PC-9 (cell line): ENCODE measurements at regions of chr14 and their contacts with region 1.

Region 1: DNA sequence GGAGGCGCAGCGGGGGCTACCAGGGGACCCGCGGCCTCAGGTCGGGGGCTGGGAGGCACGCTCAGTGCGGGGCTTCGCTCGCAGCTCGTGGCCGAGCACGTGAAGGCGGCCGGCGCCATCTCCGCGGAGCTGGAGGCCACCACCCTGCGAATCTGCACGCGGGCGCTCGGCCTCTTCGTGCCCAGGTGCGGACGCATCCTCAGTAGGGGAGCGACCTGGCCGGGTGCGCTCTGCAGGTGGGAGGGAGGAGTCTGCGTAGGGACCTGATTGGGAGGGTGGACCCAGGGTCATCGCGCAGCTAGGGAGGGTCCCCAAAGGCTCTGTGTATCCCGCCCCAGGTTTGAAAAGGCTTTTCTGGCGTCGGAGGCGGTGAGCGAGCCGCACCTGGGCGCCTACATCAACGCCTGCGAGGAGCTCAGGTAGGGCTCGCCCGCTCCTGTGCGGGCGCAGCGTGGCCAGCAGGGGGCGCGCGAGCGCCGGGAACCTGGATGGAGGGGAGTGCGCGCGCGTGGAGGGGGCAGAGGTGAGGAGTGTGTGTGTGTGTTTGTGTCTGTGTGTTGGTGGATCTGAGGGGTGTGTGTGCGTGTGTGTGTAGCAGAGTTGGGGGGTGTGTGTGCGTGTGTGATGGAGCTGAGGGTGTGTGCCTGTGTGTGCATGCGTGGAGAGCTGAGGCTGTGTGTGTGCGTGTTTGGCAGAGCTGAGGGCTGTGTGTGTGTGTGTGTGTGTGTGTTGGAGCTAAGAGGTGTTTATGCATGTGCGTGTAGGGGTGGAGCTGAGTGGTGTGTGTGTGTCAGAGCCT is 10.3 kb downstream of the EXOC3L4 start:
- DNase-seq: peak; percentile 76 to 93
- H3K4me3 ChIP-seq: peak overlapping the region; percentile 54; the same call in 1 of the 2 replicates
- H3K27ac ChIP-seq: no peak overlapping the region
- H3K4me1 ChIP-seq: peaks cover 68% of the 10 kb centered on the region
- H3K27me3 ChIP-seq: no peaks in the 10 kb centered on the region
- CTCF ChIP-seq: peak; percentile 100

Region 2: GRCh38 chr14:103091041-103091882 is 13.6 kb before region 1 on chr14:
- CTCF ChIA-PET with region 1: interaction called, 16 read pairs
- POLR2A ChIA-PET with region 1: no interaction called
- intact Hi-C with region 1: loop called (anchors 1 kb)
- DNase-seq: peak; percentile 67 to 85
- H3K4me3 ChIP-seq: peak overlapping the region; percentile 56
- H3K27ac ChIP-seq: no peak overlapping the region
- H3K4me1 ChIP-seq: peaks cover 6% of the 10 kb centered on the region
- H3K27me3 ChIP-seq: no peaks in the 10 kb centered on the region
- CTCF ChIP-seq: peak; percentile 79

Region 3: GRCh38 chr14:103141119-103141796 is 36.4 kb after region 1 on chr14:
- CTCF ChIA-PET with region 1: interaction called, 83 read pairs
- POLR2A ChIA-PET with region 1: interaction called, 3 read pairs
- intact Hi-C with region 1: loop called (anchors 1 kb)
- DNase-seq: peak; percentile 78 to 84
- H3K4me3 ChIP-seq: no peak overlapping the region
- H3K27ac ChIP-seq: 0 out of 2 replicates have a peak overlapping the region, but pooled peaks have one; percentile 30
- H3K4me1 ChIP-seq: peaks cover 59% of the 10 kb centered on the region
- H3K27me3 ChIP-seq: no peaks in the 10 kb centered on the region
- CTCF ChIP-seq: peak; percentile 99

Region 4: GRCh38 chr14:103207029-103207387 is 102.2 kb after region 1 on chr14:
- CTCF ChIA-PET with region 1: interaction called, 7 read pairs
- POLR2A ChIA-PET with region 1: no interaction called
- intact Hi-C with region 1: loop called (anchors 2 kb)
- DNase-seq: peak; percentile 88 to 98
- H3K4me3 ChIP-seq: peak overlapping the region; percentile 58
- H3K27ac ChIP-seq: peak overlapping the region; percentile 83
- H3K4me1 ChIP-seq: peaks cover 42% of the 10 kb centered on the region
- H3K27me3 ChIP-seq: no peaks in the 10 kb centered on the region
- CTCF ChIP-seq: no peak

Region 5: GRCh38 chr14:103333754-103334643 is 229.1 kb after region 1 on chr14 and contains the start of gene EIF5:
- CTCF ChIA-PET with region 1: interaction called, 6 read pairs
- POLR2A ChIA-PET with region 1: interaction called, 6 read pairs
- intact Hi-C with region 1: loop called (anchors 1 kb)
- DNase-seq: peak; percentile 98 to 100
- H3K4me3 ChIP-seq: peak within 1 kb of the TSS; percentile 88
- H3K27ac ChIP-seq: peak within 1 kb of the TSS; percentile 94
- H3K4me1 ChIP-seq: peaks cover 42% of the 10 kb centered on the region
- H3K27me3 ChIP-seq: no peaks in the 10 kb centered on the region
- CTCF ChIP-seq: no peak
- total RNA-seq, gene EIF5: 310 and 330 TPM in 2 replicates